ENCODE measurements at regions of chr19 and their contacts with region 1.

Region 1: DNA sequence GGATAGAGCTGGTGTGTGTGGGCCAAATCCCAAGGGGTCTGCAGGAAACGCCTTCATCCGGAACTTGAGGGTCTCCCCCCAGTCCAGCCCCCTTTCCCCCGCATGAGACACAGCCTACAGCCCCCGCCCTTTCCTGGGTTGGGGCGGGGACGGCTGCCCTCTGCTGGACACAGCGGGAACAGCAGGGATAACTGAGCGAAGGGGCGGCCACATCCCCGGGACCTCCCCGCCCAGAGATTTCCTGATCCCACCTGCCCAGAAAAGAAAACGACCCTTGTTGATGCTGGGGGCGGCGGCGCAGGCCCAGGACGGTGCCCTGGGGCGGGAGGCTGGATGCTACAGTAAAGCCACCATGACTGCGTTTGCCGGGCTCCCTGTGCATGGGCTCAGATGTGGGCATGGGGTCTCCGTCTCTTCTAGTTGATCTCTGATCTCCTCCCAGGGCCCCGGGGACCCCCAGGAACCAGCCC is 14.2 kb downstream of the ONECUT3 start:
- DNase-seq: no peak
- H3K4me3 ChIP-seq: no peak overlapping the region
- H3K27me3 ChIP-seq: peaks cover 37% of the 10 kb centered on the region
- CTCF ChIP-seq: peak; percentile 98

Region 2: DNA sequence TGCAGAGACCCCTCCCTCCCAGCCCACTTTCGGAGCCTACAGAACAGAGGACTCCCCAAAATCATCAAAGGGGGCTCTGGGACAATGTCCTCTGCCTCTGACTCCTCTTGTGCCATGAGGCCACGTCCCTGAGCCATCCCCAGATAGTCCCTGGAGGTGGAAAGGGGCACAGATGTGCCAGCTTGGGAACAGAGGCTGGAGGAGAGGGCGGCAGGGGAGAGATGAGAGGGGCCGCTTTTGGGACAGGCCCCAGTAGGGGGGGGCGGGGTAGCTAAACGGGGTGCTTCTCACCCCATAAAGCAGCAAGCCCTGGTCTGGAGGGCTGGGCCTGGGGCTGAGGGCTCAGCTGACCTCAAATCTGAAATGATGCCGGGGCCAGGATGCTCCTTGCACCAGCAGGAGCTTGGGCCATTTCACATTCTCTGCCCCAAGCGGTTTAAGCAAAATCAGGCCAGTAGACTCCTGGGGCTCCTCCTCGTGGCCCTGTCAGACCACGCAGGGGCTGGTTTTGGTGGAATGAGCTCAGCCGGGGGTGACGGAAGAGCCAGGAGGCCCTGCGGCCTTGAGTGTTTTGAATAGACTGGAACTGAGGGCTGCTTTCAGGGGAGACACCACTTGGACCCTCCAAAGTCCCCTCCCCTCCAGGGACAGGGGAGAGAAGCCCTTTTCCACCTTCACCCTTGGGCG is 12.9 kb after region 1 on chr19:
- CTCF ChIA-PET with region 1: interaction called, 18 read pairs
- POLR2A ChIA-PET with region 1: no interaction called
- DNase-seq: no peak
- H3K4me3 ChIP-seq: no peak overlapping the region
- H3K27me3 ChIP-seq: peaks cover 28% of the 10 kb centered on the region
- CTCF ChIP-seq: peak; percentile 42; the same call in 1 of the 2 replicates

Region 3: GRCh38 chr19:1789261-1790041 is 22.0 kb after region 1 on chr19:
- CTCF ChIA-PET with region 1: interaction called, 10 read pairs
- POLR2A ChIA-PET with region 1: no interaction called
- DNase-seq: no peak
- H3K4me3 ChIP-seq: no peak overlapping the region
- H3K27me3 ChIP-seq: no peaks in the 10 kb centered on the region; the same call in none of the 2 replicates
- CTCF ChIP-seq: no peak

Measured in BJ (cell line).